Keratinocyte (primary cell): ENCODE measurements at regions of chr2 and their contacts with region 1.

Region 1: GRCh38 chr2:10043906-10044601 is 704 bp downstream of the KLF11 start:
- DNase-seq: peak; percentile 67
- H3K4me3 ChIP-seq: peak overlapping the region; percentile 44 to 49 (median 49)
- H3K27ac ChIP-seq: no peak overlapping the region
- H3K4me1 ChIP-seq: peaks cover 13% of the 10 kb centered on the region
- H3K27me3 ChIP-seq: peaks cover 10% of the 10 kb centered on the region
- CTCF ChIP-seq: no peak

Region 2: GRCh38 chr2:9770308-9771100 is 273.6 kb before region 1 on chr2:
- dilution Hi-C with region 1: loop called (anchors 25 kb)
- DNase-seq: no peak
- H3K4me3 ChIP-seq: peak overlapping the region in 1 of 3 experiments; percentile 52
- H3K27ac ChIP-seq: no peak overlapping the region
- H3K4me1 ChIP-seq: peaks cover 20% of the 10 kb centered on the region
- H3K27me3 ChIP-seq: peaks cover 17% of the 10 kb centered on the region
- CTCF ChIP-seq: peak in 2 of 3 experiments; percentile 84 to 86

Region 3: GRCh38 chr2:10126632-10127026 is 82.6 kb after region 1 on chr2:
- dilution Hi-C with region 1: no loop called
- DNase-seq: no peak
- H3K4me3 ChIP-seq: no peak overlapping the region
- H3K27ac ChIP-seq: no peak overlapping the region
- H3K4me1 ChIP-seq: peaks cover 19% of the 10 kb centered on the region
- H3K27me3 ChIP-seq: no peaks in the 10 kb centered on the region
- CTCF ChIP-seq: no peak

Region 4: DNA sequence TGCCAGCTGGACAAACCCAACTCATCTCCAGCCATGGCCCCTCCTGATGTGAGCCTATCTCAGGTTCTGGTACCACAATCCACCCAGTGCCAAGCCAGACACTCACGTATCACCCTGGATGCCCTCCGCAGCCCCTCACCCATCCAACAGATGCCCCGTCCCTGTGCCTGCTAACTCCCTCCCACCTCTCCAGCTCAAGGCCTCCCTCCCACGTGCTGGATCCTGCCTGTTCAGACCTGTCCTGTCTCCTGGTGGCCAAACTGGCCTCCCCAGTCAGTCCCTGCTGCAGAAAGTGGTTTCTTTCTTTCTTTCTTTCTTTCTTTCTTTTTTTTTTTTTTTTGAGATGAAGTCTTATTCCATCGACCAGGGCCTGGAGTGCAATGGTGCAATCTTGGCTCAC is 164.7 kb after region 1 on chr2:
- dilution Hi-C with region 1: no loop called
- DNase-seq: no peak
- H3K4me3 ChIP-seq: no peak overlapping the region
- H3K27ac ChIP-seq: no peak overlapping the region
- H3K4me1 ChIP-seq: no peaks in the 10 kb centered on the region
- H3K27me3 ChIP-seq: no peaks in the 10 kb centered on the region
- CTCF ChIP-seq: peak in 1 of 3 experiments; percentile 30

Region 5: GRCh38 chr2:10225291-10226037 is 181.4 kb after region 1 on chr2:
- dilution Hi-C with region 1: no loop called
- DNase-seq: no peak
- H3K4me3 ChIP-seq: no peak overlapping the region
- H3K27ac ChIP-seq: no peak overlapping the region
- H3K4me1 ChIP-seq: no peaks in the 10 kb centered on the region
- H3K27me3 ChIP-seq: peaks cover 19% of the 10 kb centered on the region
- CTCF ChIP-seq: no peak